Left ventricle myocardium inferior (tissue), 1 donor: ENCODE measurements at regions of chr5 and their contacts with region 1.

Region 1: DNA sequence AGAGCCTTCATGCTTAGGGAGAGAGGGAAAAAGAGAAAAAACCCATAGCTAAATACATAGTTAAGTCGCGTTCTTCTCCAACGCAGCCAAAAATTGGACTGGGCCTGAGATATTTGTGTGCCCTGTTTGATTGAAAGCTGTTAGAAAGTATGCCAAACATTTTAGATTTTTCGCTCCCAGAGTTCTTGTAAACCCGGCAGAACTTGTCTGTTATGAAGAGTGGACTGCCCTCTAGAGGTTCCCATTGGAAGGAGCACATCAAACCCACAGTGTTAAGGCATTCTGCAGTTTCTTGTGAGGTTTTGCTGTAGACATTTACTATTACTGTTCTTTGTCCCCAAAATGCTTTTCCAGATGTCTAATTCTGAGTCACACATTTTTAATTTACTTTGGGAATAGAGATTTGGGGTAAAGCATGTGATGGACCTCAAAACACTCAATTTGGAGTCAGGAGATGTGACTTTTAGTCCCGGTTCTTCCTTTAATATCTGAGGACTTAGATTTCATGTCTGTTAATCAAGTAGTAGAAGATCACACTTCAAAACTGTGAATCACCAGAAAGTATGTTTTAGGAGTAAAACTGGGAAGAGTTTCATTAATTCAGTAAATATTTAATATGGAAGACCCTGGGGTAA is 96.6 kb downstream of the PCSK1 start:
- DNase-seq: no peak
- H3K4me3 ChIP-seq: peak overlapping the region; percentile 6
- H3K27ac ChIP-seq: peak overlapping the region; percentile 65
- H3K4me1 ChIP-seq: peaks cover 38% of the 10 kb centered on the region
- H3K27me3 ChIP-seq: no peaks in the 10 kb centered on the region
- CTCF ChIP-seq: peak; percentile 91

Region 2: DNA sequence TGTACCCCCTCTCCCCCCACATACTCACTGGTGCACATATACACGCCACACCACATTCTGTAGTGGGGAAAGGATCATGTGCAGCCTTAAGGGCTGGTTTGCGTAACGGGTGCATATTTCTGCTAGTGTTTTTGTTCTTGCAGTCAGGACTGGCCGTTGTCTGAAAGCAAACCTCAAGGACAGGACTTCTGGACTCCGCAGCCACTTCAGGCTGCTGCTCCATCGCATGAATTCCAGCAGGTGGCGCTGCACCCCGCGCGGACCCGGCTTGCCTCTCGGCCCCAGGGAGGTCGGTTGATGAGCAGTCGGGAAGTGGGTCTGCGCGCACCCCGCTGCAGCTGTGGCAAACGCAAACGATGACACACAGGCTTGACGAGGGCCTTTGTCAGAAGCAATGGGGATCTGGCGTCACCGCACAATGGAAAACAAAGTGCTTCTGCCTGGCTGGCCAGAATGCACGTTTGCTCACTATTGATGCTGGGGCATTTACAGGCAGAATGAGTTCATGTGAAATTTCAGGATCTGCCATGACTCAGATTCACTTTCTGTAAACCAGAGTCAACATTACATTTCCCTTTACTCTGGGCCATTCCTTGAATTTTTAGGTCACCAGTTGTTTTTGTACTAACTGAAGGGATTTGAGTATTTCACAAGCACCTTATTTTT is 477.7 kb before region 1 on chr5:
- intact Hi-C with region 1: loop called (anchors 5 kb)
- DNase-seq: peak; percentile 84
- H3K4me3 ChIP-seq: peak overlapping the region; percentile 48
- H3K27ac ChIP-seq: peak overlapping the region; percentile 96
- H3K4me1 ChIP-seq: peaks cover 74% of the 10 kb centered on the region
- H3K27me3 ChIP-seq: no peaks in the 10 kb centered on the region
- CTCF ChIP-seq: peak; percentile 100

Region 3: GRCh38 chr5:96370976-96371375 is 34.5 kb after region 1 on chr5:
- intact Hi-C with region 1: no loop called
- DNase-seq: no peak
- H3K4me3 ChIP-seq: no peak overlapping the region
- H3K27ac ChIP-seq: no peak overlapping the region
- H3K4me1 ChIP-seq: no peaks in the 10 kb centered on the region
- H3K27me3 ChIP-seq: no peaks in the 10 kb centered on the region
- CTCF ChIP-seq: no peak

Region 4: GRCh38 chr5:96439477-96440184 is 103.2 kb after region 1 on chr5:
- intact Hi-C with region 1: no loop called
- DNase-seq: no peak
- H3K4me3 ChIP-seq: no peak overlapping the region
- H3K27ac ChIP-seq: no peak overlapping the region
- H3K4me1 ChIP-seq: peaks cover 2% of the 10 kb centered on the region
- H3K27me3 ChIP-seq: peaks cover 39% of the 10 kb centered on the region
- CTCF ChIP-seq: no peak